ENCODE measurements at regions of chr9 and their contacts with region 1.

Region 1: GRCh38 chr9:133160742-133161546 is 2.8 kb downstream of the GBGT1 start:
- DNase-seq: no peak
- H3K4me3 Mint-ChIP-seq: peak overlapping the region; percentile 70
- H3K27ac Mint-ChIP-seq: no peak overlapping the region
- H3K4me1 Mint-ChIP-seq: peaks cover 5% of the 10 kb centered on the region
- H3K27me3 Mint-ChIP-seq: peaks cover 5% of the 10 kb centered on the region

Region 2: DNA sequence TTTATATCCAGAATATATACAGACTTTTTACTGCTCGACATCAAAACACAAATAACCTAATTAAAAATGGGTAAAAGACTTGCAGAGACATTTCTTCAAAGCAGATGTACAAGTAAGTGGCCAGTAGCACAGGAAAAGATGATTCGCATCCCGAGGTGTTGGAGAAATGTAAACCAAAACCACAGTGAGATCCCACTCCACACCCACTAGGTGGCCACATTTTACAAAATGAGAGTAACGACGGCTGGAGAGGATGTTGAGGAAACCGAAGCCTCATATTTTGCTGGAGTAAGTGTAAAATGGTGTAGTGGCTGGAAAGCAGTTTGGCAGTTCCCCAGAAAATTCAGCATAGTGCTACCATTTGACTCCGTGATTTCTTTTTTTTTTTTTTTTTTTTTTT is 24.0 kb after region 1 on chr9:
- intact Hi-C with region 1: loop called (anchors 2 kb)
- DNase-seq: peak; percentile 51
- H3K4me3 Mint-ChIP-seq: no peak overlapping the region
- H3K27ac Mint-ChIP-seq: peak overlapping the region; percentile 42
- H3K4me1 Mint-ChIP-seq: peaks cover 27% of the 10 kb centered on the region
- H3K27me3 Mint-ChIP-seq: peaks cover 40% of the 10 kb centered on the region

Measured in activated T-helper 1 cell treated with anti-CD3 and anti-CD28 coated beads, Interleukin-12 subunit alpha, Interleukin-12 subunit beta, Interleukin-2, Interleukin-4 antibody, amounts not matched to agents 30 ng/mL and 10 ng/mL and 1 ng/mL, durations not matched to agents 14 hours and 24 hours and 36 hours (primary cell).